ENCODE measurements at regions of chr10 and their contacts with region 1.

Region 1: GRCh38 chr10:124659380-124659779 is 84.8 kb downstream of the FAM53B start:
- DNase-seq: no peak
- H3K27ac ChIP-seq: peak overlapping the region; percentile 59
- CTCF ChIP-seq: no peak

Region 2: DNA sequence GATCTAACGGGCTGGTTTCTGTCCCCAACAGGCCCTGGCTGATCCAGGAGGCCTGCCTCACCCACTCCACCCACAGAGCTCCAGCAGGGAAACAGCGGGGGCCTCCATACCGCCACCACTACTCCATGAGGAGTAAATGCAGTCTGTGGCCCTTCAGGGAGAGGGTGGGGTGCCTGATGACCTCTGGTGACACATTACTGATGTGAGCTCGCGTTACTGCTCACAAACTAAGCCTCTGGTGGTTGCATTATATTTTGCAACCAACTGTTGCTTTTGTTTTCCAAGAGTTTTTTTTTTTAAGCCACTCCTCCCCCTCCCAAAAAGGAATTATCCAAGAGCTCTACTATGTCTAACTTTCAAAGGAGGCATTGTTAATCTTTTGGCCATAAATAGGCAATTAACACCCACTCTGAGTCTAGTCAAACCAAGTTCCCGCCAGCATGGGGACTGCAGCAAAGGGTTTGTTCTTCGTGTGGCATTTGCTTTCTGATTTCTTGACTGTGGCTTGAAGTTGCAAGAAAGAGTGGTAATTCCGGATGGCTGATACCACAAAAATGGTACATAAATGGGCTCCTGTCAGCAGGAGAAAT is 12.2 kb after region 1 on chr10:
- CTCF ChIA-PET with region 1: interaction called, 10 read pairs
- POLR2A ChIA-PET with region 1: no interaction called
- DNase-seq: peak; percentile 66
- H3K27ac ChIP-seq: peak overlapping the region; percentile 63
- CTCF ChIP-seq: no peak